ENCODE measurements at regions of chr19 and their contacts with region 1.

Region 1: GRCh38 chr19:47443331-47443730 is 24.0 kb upstream of the MEIS3 start:
- DNase-seq: peak in 8 of 10 donors; percentile 52 to 94 (median 71)

Region 2: DNA sequence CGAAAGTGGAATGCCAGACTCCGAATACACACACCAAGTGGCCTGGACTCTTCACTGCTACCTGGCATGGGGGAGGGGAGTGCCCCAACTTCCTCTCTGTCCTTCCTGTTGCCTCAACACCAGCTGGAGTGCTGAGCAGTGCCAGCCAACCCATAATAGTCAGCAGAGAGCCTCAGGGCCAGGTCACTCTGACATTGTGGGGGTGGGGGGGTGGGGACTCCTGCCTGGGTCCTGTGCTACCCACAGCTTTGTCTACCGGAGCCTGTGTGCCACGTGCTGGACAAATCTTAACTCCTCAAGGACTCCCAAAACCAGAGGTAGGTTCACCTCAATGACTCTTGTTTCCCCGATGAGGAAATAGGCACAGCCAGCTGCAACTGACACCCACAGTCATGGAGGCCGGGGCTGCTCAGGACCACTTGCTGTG is 106.5 kb before region 1 on chr19:
- intact Hi-C with region 1: no loop called
- DNase-seq: peak in 3 of 10 donors; percentile 22 to 85 (median 42)

Region 3: DNA sequence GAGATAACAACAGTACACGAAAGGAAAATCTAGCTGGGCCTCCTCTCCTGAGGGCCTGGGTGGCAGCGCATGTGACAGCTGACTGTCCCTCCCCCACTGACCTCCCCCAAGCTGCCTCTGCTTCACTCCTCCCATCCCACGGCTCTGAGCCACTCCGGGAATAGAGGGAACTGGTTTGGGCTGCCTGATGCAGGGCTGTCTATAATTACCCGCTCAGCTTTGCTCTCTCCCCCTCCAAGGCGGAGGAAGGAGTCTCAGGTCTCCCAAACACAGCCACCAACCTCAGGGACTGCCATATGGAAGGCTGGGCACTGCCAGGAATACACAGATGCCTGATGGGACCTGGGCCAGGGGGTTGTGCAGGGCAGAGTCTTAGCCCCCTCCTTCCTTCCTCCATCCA is 63.7 kb after region 1 on chr19:
- intact Hi-C with region 1: loop called (anchors 2 kb)
- DNase-seq: peak in 8 of 10 donors; percentile 49 to 94 (median 68)

Region 4: DNA sequence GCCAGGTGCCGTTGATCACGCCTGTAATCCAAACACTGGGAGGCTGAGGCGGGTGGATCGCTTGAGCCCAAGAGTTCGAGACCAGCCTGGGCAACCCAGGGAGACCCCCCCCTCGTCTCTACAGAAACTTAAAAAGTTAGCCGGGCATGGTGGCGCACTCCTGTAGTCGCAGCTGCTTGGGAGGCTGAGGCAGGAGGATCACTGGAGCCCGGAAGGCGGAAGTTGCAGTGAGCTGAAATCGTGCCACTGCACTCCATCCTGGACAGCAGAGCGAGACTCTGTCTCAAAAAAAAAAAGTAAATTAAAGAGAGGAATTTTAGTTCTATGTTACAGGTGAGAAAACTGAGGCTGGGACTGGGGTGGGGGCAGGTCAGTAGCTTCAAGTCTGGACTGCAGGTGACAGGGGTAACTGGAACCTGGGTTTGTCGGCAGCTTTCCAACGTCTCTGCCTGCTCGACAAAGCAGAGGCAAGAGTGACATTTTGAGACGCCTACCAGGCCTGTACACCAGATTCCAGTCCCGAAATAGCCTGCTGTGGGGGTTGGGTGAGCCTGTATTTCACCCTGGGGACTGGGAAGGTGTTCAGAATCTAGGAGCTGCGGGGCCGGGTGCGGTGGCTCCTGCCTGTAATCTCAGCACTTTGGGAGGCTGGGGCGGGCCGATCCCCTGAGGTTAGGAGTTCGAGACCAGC is 336.3 kb after region 1 on chr19:
- intact Hi-C with region 1: no loop called
- DNase-seq: peak; percentile 27 to 91 (median 51)